Heart left ventricle (tissue), 16 donors: ENCODE measurements at regions of chr5 and their contacts with region 1.

Region 1: DNA sequence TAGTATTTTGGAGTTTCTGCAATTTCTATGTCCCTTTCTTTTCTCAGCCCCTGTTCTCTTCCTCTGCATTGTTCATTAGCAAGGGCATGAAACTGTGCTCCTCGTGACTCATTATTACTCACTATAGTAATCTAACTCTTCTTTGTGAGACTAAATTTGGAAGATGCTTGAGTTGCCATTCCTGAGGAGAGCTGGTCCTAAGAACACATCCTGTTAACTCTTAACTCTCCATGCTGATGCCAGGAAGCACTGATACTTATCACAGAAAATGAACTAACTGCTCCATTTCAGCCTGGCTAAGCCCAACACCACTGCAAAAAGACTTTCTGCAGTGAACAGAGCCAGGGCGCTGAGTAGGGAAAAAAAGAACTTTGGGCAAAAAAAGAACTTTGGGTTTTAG is 10.6 kb upstream of the CSNK1A1 start:
- DNase-seq: peak in 1 of 5 donors; percentile 40
- ATAC-seq: peak; percentile 87 to 94 (median 94)
- H3K4me3 ChIP-seq: peak overlapping the region in 7 of 12 donors; percentile 1 to 25 (median 16)
- H3K27ac ChIP-seq: peak overlapping the region; percentile 57 to 90 (median 84)
- H3K4me1 ChIP-seq: peaks cover 0 to 47% (median 32%) of the 10 kb centered on the region in 12 donors
- H3K27me3 ChIP-seq: no peaks in the 10 kb centered on the region
- CTCF ChIP-seq: no peak
- POLR2A ChIP-seq: no peak

Region 2: GRCh38 chr5:149317281-149318048 is 244.4 kb before region 1 on chr5:
- intact Hi-C with region 1: loop called in 2 of 10 experiments (anchors 5 to 10 kb)
- DNase-seq: no peak
- ATAC-seq: no peak
- H3K4me3 ChIP-seq: no peak overlapping the region
- H3K27ac ChIP-seq: peak overlapping the region in 11 of 12 donors; percentile 2 to 79 (median 54)
- H3K4me1 ChIP-seq: peaks cover 10 to 48% (median 21%) of the 10 kb centered on the region in 12 donors
- H3K27me3 ChIP-seq: no peaks in the 10 kb centered on the region
- CTCF ChIP-seq: peak; percentile 40 to 75 (median 64)
- POLR2A ChIP-seq: no peak

Region 3: DNA sequence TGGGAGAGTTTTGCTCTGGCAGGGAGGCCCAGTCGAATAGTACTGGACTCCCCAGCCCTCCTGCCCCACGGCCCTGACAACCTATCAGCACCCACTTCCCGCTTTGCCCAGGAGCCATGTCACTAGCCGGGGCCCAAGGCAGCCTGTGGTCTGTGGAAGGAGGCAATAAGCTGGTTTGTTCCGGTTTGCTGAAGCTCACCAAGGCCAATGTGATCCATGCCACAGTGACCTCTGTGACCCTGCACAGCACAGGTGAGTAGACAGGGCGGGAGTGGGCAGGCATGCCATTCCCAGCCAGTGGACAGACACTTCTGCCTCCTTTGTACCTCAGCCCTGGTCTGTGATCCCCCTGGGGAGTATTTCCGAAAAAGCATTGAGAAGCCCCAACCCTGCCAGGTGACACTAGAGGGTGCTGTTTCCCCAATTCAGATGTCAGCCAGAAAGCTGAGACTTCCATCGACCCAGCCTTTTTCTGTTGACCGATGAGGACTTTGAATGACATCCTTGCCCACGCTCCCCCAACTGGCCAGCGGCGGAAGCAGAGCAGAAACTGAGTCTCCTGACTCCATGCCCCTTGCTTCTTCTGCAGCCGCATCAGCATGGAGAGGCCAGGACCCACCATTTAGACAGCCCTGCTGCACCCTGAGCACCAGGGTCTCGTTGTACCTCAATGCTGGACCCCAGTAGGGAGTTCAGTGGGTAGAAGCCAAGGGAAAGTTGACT is 194.4 kb before region 1 on chr5:
- intact Hi-C with region 1: loop called in 2 of 10 experiments (anchors 5 kb)
- DNase-seq: peak in 4 of 5 donors; percentile 58 to 69 (median 64)
- ATAC-seq: peak in 3 of 4 donors; percentile 57 to 62 (median 60)
- H3K4me3 ChIP-seq: no peak overlapping the region
- H3K27ac ChIP-seq: peak overlapping the region in 1 of 12 donors; percentile 60
- H3K4me1 ChIP-seq: peaks cover 0 to 26% (median 10%) of the 10 kb centered on the region in 12 donors
- H3K27me3 ChIP-seq: no peaks in the 10 kb centered on the region
- CTCF ChIP-seq: peak; percentile 62 to 84 (median 81)
- POLR2A ChIP-seq: no peak

Region 4: GRCh38 chr5:149381987-149382340 is 179.9 kb before region 1 on chr5:
- intact Hi-C with region 1: loop called (anchors 2 to 5 kb)
- DNase-seq: peak; percentile 83 to 91 (median 85)
- ATAC-seq: peak; percentile 59 to 83 (median 76)
- H3K4me3 ChIP-seq: peak overlapping the region in 4 of 12 donors; percentile 11 to 30 (median 16)
- H3K27ac ChIP-seq: peak overlapping the region; percentile 25 to 98 (median 90)
- H3K4me1 ChIP-seq: peaks cover 8 to 69% (median 41%) of the 10 kb centered on the region in 12 donors
- H3K27me3 ChIP-seq: no peaks in the 10 kb centered on the region
- CTCF ChIP-seq: peak; percentile 92 to 98 (median 96)
- POLR2A ChIP-seq: no peak

Region 5: DNA sequence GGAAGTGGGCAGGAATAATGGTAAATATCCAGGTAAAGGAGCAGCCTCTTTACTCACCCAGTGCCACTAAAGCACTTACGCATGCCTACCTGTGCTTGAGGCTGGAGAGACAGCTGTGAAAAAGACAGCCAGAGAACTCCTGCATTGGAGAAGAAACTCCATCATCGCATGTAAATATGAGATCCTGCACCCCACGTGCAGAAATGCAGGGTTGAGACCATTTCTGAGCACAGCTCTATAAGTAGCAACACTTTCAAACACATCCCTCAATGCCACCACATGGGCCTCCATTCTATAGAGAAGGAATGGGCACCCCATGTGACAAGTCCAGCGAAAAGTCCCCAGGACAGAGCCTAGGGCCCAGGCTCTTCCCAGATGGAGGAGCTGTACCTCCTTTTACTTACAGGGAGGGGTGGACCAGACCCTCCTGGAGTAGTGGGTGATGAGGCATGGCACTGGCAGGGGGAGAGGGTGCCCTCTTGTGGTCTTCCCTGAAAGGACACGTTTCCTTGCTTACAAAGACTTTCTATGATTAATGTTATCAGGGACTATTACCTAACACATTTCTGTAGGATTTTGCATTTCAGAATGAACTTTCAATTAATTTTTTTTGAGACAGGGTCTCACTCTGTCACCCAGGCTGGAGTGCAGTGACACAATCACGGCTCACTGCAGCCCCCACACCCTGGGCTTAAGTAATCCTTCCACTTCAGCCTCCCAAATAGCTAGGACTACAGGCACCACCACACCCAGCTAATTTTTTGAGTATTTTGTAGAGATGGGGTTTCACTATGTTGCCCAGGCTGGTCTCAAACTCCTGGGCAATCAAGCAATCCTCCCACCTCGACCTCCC is 127.5 kb before region 1 on chr5:
- intact Hi-C with region 1: loop called in 1 of 10 experiments (anchors 2 kb)
- DNase-seq: peak in 3 of 5 donors; percentile 60 to 64 (median 62)
- ATAC-seq: peak; percentile 14 to 27 (median 22)
- H3K4me3 ChIP-seq: no peak overlapping the region
- H3K27ac ChIP-seq: peak overlapping the region in 10 of 12 donors; percentile 8 to 97 (median 44)
- H3K4me1 ChIP-seq: peaks cover 7 to 47% (median 23%) of the 10 kb centered on the region in 12 donors
- H3K27me3 ChIP-seq: no peaks in the 10 kb centered on the region
- CTCF ChIP-seq: peak; percentile 82 to 94 (median 88)
- POLR2A ChIP-seq: no peak

Region 6: GRCh38 chr5:149442563-149443182 is 119.2 kb before region 1 on chr5:
- intact Hi-C with region 1: loop called in 8 of 10 experiments (anchors 1 to 5 kb)
- DNase-seq: peak; percentile 81 to 90 (median 85)
- ATAC-seq: peak; percentile 79 to 90 (median 86)
- H3K4me3 ChIP-seq: no peak overlapping the region
- H3K27ac ChIP-seq: peak overlapping the region; percentile 70 to 96 (median 85)
- H3K4me1 ChIP-seq: peaks cover 0 to 42% (median 21%) of the 10 kb centered on the region in 12 donors
- H3K27me3 ChIP-seq: no peaks in the 10 kb centered on the region
- CTCF ChIP-seq: peak; percentile 90 to 96 (median 93)
- POLR2A ChIP-seq: no peak

Region 7: DNA sequence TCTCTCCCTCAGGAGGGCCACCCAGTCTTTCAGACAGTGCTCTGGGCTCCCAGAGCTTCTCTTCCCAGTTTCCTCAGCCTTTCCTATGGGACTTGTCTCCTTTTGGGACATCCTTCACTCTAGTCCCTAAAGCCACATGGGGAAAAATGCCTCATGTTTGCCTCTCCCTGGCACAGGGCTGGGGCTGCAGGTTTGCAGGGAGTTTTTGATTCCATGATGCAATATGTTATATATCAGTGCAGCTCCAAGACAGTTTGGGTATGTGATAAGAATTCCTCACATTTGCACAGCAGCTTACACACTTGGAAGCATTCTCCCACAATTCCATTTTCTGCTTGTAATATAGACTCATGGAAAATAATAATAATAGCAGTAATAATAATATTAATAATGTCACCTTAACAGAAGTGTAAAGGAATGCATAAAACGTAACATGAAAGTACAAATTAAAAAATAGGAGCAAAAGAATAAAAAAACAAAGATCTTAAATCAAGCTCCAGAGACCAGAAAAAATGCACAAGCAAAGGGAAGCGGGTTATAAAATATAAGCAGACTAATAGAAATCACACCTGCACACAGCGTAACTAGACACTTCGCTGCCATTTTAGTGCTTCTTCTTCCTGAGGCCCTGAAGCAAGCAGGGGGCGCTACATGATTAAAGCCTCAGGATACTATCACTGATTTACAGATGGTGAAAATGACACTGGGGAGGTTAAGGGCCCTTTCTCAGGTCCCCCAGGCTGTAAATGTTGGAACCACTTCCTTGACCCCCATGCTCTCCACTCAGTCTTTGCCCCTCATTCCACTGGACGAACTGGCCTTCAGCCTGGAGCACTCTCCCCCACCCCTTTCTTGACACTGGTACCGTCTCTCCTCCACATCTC is 112.8 kb before region 1 on chr5:
- intact Hi-C with region 1: loop called in 6 of 10 experiments (anchors 2 to 5 kb)
- DNase-seq: no peak
- ATAC-seq: no peak
- H3K4me3 ChIP-seq: no peak overlapping the region
- H3K27ac ChIP-seq: peak overlapping the region in 11 of 12 donors; percentile 79 to 94 (median 89)
- H3K4me1 ChIP-seq: peaks cover 15 to 92% (median 67%) of the 10 kb centered on the region in 12 donors
- H3K27me3 ChIP-seq: no peaks in the 10 kb centered on the region
- CTCF ChIP-seq: peak in 6 of 12 donors; percentile 16 to 39 (median 30)
- POLR2A ChIP-seq: no peak